Natural killer cell (primary cell): ENCODE measurements at regions of chr10 and their contacts with region 1.

Region 1: DNA sequence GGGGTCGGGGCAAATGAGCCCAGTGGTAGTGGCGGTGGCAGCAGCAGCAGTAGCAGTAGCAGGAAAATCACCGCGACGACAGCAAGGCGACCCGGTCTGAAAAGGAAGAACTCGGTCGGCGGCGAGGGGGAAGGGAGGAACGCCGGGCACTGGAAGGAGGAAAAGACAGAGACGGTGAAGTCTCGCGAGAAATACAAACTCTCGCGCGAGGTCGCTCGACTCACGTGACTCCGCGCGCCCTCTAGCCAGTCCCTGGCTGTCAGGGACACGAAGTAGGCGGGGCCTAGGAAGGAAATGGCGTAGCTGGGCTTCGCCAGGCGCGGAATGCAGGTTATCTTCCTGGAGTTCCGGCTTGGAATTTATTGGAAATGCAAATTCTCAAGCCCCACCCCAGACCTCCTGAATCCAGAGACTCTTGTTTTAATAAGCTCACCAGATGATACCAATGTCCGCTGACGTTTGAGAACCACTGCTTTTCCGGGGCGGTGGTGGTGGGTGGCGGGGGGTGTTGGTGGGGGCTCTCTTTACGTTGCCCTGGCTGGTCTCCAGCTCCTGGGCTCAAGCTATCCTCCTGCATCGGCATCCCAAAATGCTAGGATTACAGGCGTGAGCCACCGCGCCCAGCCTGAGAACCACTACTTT is at the start of gene SMNDC1:
- DNase-seq: peak; percentile 98 to 99
- ATAC-seq: peak; percentile 89 to 96 (median 94)
- H3K4me3 ChIP-seq: peak within 1 kb of the TSS; percentile 79
- H3K4me3 Mint-ChIP-seq: peak within 1 kb of the TSS; percentile 94
- H3K27ac ChIP-seq: peak within 1 kb of the TSS; percentile 94
- H3K27ac Mint-ChIP-seq: peak within 1 kb of the TSS; percentile 93 to 97
- H3K4me1 ChIP-seq: peaks cover 7% of the 10 kb centered on the region
- H3K4me1 Mint-ChIP-seq: peaks cover 32 to 43% of the 10 kb centered on the region in 2 donors
- H3K27me3 ChIP-seq: no peaks in the 10 kb centered on the region
- H3K27me3 Mint-ChIP-seq: no peaks in the 10 kb centered on the region
- CTCF ChIP-seq: no peak
- total RNA-seq, gene SMNDC1: 53.3 to 56.3 (median 55.3) TPM

Region 2: GRCh38 chr10:110129490-110129889 is 175.4 kb before region 1 on chr10:
- intact Hi-C with region 1: no loop called
- DNase-seq: no peak
- ATAC-seq: no peak
- H3K4me3 ChIP-seq: no peak overlapping the region
- H3K4me3 Mint-ChIP-seq: no peak overlapping the region
- H3K27ac ChIP-seq: no peak overlapping the region
- H3K27ac Mint-ChIP-seq: peak overlapping the region in 1 of 2 donors; percentile 41
- H3K4me1 ChIP-seq: no peaks in the 10 kb centered on the region
- H3K4me1 Mint-ChIP-seq: peaks cover 0 to 6% of the 10 kb centered on the region in 2 donors
- H3K27me3 ChIP-seq: no peaks in the 10 kb centered on the region
- H3K27me3 Mint-ChIP-seq: no peaks in the 10 kb centered on the region
- CTCF ChIP-seq: no peak

Region 3: DNA sequence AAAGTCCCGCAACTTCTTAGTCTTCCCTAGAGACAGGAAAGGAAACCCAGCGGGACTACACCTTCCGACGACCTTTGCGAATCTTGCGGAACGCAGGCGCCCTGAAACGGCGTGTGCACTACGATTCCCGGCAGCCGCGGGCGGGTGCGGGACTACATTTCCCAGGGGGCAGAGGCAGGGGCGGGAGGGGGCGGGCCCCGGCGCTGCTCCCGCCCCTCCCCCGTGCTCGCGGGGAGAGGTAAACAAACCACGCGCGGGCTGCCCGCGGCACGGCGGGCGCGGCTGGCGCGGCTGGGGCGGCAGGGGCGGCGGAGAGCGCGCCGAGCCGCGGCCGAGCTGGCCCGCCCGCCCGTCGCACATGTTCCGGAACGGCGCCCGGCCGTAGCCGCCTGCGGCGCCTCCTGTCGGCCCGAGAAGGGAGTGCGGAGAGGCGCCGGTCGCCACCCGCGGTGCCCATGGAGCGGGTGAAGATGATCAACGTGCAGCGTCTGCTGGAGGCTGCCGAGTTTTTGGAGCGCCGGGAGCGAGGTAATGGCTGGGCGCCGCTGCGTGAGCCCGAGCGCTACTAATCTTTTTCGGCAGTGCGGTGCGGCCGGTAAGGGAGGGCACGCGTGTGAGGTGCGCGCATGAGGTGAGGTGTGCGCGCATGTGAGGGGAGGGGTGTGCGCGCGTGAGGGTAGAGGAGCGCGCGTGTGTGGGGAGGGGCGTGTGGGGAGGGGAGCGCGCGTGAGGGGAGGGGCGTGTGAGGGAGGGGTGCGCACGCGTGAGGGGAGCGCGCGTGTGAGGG is 79.0 kb before region 1 on chr10:
- intact Hi-C with region 1: loop called (anchors 1 kb)
- DNase-seq: peak; percentile 79 to 95
- ATAC-seq: peak; percentile 70 to 87 (median 77)
- H3K4me3 ChIP-seq: peak overlapping the region; percentile 66
- H3K4me3 Mint-ChIP-seq: peak overlapping the region; percentile 96
- H3K27ac ChIP-seq: peak overlapping the region; percentile 60
- H3K27ac Mint-ChIP-seq: peak overlapping the region; percentile 84
- H3K4me1 ChIP-seq: peaks cover 16% of the 10 kb centered on the region
- H3K4me1 Mint-ChIP-seq: peaks cover 25 to 31% of the 10 kb centered on the region in 2 donors
- H3K27me3 ChIP-seq: peaks cover 6% of the 10 kb centered on the region
- H3K27me3 Mint-ChIP-seq: peaks cover 22 to 33% of the 10 kb centered on the region in 2 donors
- CTCF ChIP-seq: peak; percentile 51

Region 4: DNA sequence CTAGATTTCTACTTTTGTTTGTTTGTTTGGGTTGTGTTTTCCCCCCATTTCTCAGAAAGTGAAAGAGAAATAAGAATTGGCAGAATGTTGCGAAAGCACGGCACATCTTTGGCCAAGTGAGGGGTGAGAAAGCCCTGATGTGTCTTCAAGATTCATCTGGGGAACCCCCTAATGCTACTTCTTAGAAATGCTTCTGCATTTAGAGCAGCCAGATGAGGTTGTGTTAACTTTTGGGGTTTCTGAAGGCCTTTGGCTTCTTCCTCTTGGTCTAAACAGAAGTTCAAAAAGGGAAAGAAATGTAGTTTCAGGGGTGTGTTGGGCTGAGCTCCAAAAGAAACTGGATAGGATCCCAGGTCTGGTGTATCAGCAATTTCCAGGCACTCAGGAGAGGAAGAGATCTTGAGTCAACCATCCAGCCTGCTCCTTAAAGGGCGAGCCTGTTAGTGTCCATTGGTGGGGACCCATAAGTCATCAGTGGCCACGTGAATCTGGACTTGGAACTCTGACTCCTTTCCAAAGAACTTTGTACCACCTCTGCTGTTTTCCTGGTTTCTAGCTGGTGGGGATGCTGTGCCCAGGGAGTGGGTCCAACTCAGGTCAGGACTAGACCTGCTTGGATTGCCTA is 199.3 kb after region 1 on chr10:
- intact Hi-C with region 1: loop called (anchors 2 kb)
- DNase-seq: peak; percentile 51 to 86
- ATAC-seq: peak; percentile 90 to 94 (median 93)
- H3K4me3 ChIP-seq: no peak overlapping the region
- H3K4me3 Mint-ChIP-seq: peak overlapping the region; percentile 76
- H3K27ac ChIP-seq: peak overlapping the region; percentile 95
- H3K27ac Mint-ChIP-seq: peak overlapping the region; percentile 96
- H3K4me1 ChIP-seq: peaks cover 59% of the 10 kb centered on the region
- H3K4me1 Mint-ChIP-seq: peaks cover 64 to 79% of the 10 kb centered on the region in 2 donors
- H3K27me3 ChIP-seq: no peaks in the 10 kb centered on the region
- H3K27me3 Mint-ChIP-seq: no peaks in the 10 kb centered on the region
- CTCF ChIP-seq: no peak

Region 5: GRCh38 chr10:110547139-110547761 is 242.3 kb after region 1 on chr10:
- intact Hi-C with region 1: loop called (anchors 1 kb)
- DNase-seq: peak in 1 of 2 donors; percentile 79
- ATAC-seq: peak; percentile 71 to 91 (median 78)
- H3K4me3 ChIP-seq: no peak overlapping the region
- H3K4me3 Mint-ChIP-seq: no peak overlapping the region
- H3K27ac ChIP-seq: no peak overlapping the region
- H3K27ac Mint-ChIP-seq: no peak overlapping the region
- H3K4me1 ChIP-seq: no peaks in the 10 kb centered on the region
- H3K4me1 Mint-ChIP-seq: peaks cover 4 to 8% of the 10 kb centered on the region in 2 donors
- H3K27me3 ChIP-seq: peaks cover 5% of the 10 kb centered on the region
- H3K27me3 Mint-ChIP-seq: peaks cover 6 to 42% of the 10 kb centered on the region in 2 donors
- CTCF ChIP-seq: peak; percentile 90

Region 6: DNA sequence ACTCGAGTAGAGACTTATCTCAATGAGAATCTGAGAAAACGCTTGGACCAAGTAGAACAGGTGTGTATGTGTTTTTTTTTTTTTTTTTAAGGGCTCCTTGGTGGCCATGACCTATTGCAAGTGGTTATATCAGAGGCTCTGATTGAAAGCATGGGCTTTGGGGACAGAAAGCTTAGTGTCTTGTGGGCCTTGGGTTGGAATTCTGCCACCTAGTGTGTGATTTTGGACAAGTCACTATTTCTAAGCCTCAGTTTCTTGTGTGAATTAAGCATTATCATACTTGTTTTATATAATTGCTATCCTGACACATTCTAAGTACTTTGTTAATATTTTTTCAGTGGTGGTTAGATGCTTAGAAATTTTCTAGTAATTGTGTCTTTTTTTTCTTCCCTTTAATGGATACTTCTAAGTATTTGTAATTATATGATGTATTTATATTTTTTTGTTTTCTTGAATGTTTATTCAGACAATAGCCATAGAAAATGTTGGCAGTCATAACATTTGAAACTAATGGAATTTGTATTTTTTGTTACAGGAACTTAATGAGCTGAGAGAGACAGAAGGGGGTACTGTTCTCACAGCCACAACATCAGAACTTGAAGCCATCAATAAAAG is 295.7 kb after region 1 on chr10:
- intact Hi-C with region 1: loop called (anchors 1 kb)
- DNase-seq: peak in 1 of 2 donors; percentile 75
- ATAC-seq: peak in 2 of 3 donors; percentile 42 to 65
- H3K4me3 ChIP-seq: no peak overlapping the region
- H3K4me3 Mint-ChIP-seq: no peak overlapping the region
- H3K27ac ChIP-seq: no peak overlapping the region
- H3K27ac Mint-ChIP-seq: no peak overlapping the region
- H3K4me1 ChIP-seq: no peaks in the 10 kb centered on the region
- H3K4me1 Mint-ChIP-seq: no peaks in the 10 kb centered on the region
- H3K27me3 ChIP-seq: no peaks in the 10 kb centered on the region
- H3K27me3 Mint-ChIP-seq: no peaks in the 10 kb centered on the region
- CTCF ChIP-seq: peak; percentile 56

Region 7: DNA sequence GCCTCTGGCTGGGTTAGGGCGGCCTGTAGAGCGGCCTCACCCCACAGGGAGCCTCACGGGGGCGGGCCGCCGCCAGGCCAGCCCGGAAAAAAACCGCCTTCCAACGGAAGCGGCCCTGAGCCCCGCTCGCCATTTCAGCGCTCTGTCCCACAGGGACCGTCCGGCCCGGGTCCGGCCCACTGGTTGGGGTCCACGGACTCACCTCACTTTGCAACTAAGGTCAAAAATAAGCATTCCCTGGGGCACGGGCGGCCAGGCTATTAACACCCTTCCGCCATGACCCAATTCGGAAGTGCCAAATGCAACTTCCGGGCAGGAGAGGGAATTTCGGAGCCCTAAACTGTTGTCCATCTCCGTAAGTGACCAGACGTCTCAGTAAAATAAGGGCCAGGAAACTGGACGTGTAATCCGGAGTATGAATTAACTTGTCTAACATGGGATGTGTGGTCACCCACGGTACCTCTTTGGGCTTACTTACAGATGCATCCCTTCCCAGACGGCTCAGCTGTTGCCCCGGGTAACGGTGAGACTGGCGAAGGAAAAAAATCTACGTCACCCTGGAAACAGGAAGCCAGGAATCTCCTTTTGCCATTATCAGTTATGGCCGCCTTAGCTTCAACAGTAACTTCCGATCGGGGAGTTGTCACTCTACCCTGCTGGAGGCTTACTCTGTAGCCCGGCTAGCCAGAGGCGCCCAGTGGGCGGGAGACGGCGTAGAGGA is 613.9 kb after region 1 on chr10 and contains the start of gene BBIP1:
- intact Hi-C with region 1: loop called (anchors 10 kb)
- DNase-seq: peak; percentile 81 to 99
- ATAC-seq: peak; percentile 88 to 98 (median 90)
- H3K4me3 ChIP-seq: peak within 1 kb of the TSS; percentile 86
- H3K4me3 Mint-ChIP-seq: peak within 1 kb of the TSS; percentile 97
- H3K27ac ChIP-seq: peak within 1 kb of the TSS; percentile 98
- H3K27ac Mint-ChIP-seq: peak within 1 kb of the TSS; percentile 99 to 100
- H3K4me1 ChIP-seq: peaks cover 7% of the 10 kb centered on the region
- H3K4me1 Mint-ChIP-seq: peaks cover 33 to 46% of the 10 kb centered on the region in 2 donors
- H3K27me3 ChIP-seq: no peaks in the 10 kb centered on the region
- H3K27me3 Mint-ChIP-seq: no peaks in the 10 kb centered on the region
- CTCF ChIP-seq: no peak
- total RNA-seq, gene BBIP1: 27.2 to 58.6 (median 27.7) TPM